ENCODE measurements at regions of chr15 and their contacts with region 1.

Region 1: DNA sequence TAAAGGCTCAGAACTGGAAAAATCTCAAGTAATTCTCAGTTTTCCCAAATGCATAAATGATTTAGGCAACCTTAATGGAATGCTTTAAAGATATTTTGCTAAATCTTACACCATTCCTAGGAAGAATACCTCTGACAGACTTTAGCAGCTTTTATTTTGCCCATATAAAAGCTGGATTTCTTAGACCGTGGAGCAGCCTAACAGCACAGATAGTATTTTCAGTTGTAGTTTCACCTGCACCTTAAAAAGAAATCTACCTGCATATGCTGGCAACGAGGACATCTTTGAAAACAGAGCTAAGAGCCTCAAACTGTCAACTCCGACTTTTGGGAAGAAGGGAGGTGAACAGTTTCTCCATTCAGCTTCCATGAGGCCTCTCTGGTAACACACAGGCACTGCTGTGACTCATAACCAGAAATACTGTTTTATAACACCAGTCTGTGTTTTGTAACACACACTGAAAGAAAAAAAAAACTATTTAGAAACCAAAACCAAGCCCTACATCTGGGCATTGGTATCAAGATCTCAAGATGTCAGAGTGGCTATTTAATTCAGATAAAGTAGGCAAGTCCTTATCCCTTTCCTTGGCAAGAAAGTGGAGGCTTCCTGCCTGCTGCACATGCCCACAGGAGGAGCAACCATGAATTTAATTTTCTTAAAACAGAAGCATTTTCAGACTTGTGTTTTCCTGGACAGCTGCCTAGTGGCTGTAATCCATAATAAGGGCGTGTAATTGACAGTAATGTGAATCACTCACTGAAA is 181.5 kb upstream of the ICE2 start:
- DNase-seq: no peak
- ATAC-seq: peak; percentile 80
- H3K4me3 Mint-ChIP-seq: no peak overlapping the region
- H3K27ac Mint-ChIP-seq: no peak overlapping the region
- H3K4me1 Mint-ChIP-seq: peaks cover 18% of the 10 kb centered on the region
- H3K27me3 Mint-ChIP-seq: no peaks in the 10 kb centered on the region
- CTCF ChIP-seq: no peak

Region 2: GRCh38 chr15:60672400-60672799 is 11.9 kb after region 1 on chr15:
- CTCF ChIA-PET with region 1: interaction called, 15 read pairs
- POLR2A ChIA-PET with region 1: interaction called, 5 read pairs
- intact Hi-C with region 1: no loop called
- DNase-seq: no peak
- ATAC-seq: no peak
- H3K4me3 Mint-ChIP-seq: no peak overlapping the region
- H3K27ac Mint-ChIP-seq: no peak overlapping the region
- H3K4me1 Mint-ChIP-seq: peaks cover 9% of the 10 kb centered on the region
- H3K27me3 Mint-ChIP-seq: no peaks in the 10 kb centered on the region
- CTCF ChIP-seq: peak; percentile 34